ENCODE measurements at regions of chr20 and their contacts with region 1.

Region 1: DNA sequence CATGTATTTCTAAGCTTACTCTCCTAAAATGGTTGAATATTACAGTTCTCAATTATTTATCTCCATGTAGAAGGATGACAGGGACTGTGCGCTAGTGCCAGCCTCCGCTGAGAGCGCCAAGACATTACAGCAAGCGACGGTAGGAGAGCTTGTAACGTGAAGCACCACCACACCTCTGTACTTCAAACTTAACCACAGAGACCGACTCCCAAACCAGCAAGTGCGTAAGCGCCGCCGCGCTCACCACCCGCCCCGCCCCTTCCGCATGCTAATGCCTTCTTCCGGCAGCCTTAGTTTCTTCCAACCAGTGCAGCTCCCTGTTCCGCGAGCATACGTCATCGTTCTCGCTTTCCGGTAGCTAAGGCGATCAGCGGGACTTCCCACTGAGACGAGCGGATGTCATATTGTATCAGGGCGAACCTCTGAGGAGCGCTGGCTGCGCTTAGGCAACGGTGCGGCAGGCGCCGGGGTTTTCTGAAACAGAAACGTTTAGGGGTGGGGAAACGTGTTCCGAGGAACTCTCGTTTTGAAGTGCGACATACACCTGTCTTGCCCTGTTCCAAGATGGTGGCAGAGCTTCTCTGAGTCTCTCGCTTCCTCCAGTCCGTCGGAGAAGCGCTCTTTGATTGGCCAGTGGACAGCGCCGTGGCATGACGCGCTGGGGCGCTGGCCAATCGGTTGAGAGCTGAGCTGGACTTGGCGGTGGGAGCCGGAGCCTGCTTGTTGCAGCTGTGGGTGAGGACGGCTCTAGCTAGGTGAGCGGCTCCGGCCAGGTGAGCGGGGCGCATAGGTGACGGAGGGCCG is at the start of gene SEC23B:
- DNase-seq: peak; percentile 95
- CTCF ChIP-seq: no peak

Region 2: DNA sequence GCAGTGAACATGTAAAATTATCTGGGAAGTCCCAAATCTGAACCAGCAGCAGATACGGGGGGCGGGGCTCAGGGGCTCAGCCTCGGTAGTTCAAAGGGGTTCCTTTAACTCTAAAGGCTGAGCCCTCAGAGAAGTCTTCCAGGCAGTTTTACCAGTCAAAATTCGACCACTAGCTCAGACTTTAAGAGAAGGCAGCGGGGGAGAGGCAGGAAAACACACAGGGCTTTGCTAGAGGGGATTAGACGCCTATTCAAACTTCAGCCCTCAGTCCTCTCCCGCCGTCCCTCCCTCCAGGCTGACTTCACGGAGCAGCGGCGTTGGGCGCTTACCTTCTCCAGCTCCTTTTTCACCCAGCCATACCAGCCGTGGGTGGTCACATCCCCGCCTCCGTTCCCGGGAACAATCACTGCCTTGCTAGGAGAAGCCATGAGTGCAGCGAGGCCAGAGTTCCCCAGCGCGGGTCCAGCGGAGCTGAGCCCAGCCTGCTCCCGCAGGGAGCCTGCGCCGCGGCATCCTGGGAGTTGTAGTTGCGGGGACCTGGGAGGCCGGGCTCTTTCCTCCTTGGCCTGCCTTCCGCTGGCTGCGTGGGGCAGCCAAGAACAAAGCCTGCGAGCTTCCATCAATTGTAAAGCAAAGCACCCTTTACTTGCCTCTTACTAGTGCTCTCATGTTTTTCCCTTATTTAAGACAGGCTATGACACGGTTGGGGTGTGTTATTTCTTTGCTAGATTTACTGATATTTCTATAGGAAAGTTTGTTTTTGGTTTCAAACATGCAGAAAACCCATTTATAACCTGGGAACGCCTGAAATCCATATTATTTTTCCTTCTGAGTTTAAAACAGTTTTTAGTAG is 10.5 kb before region 1 on chr20 and contains the start of gene RBBP9:
- CTCF ChIA-PET with region 1: interaction called, 35 read pairs
- POLR2A ChIA-PET with region 1: interaction called, 18 read pairs
- DNase-seq: peak; percentile 88
- CTCF ChIP-seq: no peak